AG04449 (cell line): ENCODE measurements at regions of chr16 and their contacts with region 1.

Region 1: DNA sequence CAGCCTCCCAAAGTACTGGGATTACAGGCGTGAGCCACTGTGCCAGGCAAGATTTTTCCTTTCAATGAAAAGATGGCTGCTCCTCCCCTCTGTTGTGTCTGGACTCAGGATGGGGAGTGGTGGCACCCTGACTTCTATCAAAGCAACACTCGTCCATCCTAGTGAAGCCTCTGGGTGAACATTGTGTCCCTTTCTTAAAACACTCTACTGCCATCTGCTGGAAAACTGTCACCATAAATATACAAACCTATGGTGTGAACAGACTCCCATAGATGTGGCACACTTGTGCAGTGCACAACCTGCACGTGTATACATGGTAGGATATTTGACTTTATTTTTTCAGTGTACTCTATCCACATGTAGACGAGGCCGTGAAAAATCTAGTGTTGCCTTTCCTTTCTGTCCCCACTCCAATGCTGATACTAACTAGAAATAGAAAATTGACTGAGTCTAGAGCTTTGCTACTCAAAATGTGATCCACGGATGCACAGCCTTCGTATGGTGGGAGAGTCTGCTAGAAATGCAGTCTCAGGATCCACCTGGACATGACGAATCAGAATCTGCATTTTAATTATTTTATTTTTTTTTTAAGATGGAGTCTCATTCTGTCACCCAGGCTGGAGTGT is 55.9 kb upstream of the PLCG2 start:
- DNase-seq: peak; percentile 50
- H3K4me3 ChIP-seq: no peak overlapping the region
- CTCF ChIP-seq: peak; percentile 57

Region 2: GRCh38 chr16:81384006-81384405 is 339.2 kb before region 1 on chr16:
- CTCF ChIA-PET with region 1: interaction called, 11 read pairs
- POLR2A ChIA-PET with region 1: no interaction called
- DNase-seq: no peak
- H3K4me3 ChIP-seq: no peak overlapping the region
- CTCF ChIP-seq: no peak

Region 3: DNA sequence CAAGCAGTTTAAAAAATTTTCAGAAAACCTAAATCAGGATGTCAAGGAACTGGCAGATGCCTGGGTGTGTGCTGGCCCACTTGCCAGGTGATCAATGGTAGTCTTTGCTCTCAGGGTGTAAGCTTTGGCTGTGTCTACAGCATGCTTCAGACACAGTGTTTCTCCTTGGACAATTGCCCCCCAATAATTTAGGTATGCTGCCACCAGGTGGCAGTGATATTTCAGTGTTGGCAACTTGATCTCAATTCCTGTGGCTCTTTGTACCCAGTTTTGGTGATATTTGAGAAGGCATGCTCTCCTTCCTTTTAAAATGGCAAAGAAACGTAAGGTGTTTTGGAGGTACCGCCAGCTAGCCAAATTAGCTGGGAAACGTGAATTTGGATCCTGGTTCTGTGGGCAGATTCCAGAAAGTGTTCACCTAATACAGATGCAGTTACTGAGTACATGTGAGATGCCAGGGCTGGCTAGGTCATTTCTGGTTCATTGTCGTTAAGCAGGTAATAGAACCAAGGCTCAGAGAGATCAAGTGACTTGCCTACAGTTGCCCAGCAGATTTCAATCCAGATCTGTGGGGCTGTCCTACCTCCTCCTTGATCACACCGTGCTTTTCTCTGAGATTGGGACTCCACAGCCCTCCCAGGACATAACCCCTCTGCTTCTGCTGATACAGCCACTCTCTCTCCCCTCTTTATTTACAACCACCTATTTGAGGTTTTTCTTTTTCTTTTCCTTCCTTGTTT is 99.7 kb before region 1 on chr16:
- CTCF ChIA-PET with region 1: interaction called, 46 read pairs
- POLR2A ChIA-PET with region 1: no interaction called
- DNase-seq: no peak
- H3K4me3 ChIP-seq: no peak overlapping the region
- CTCF ChIP-seq: peak; percentile 55

Region 4: GRCh38 chr16:81696961-81697615 is 26.1 kb before region 1 on chr16:
- CTCF ChIA-PET with region 1: no interaction called
- POLR2A ChIA-PET with region 1: no interaction called
- DNase-seq: peak; percentile 4
- H3K4me3 ChIP-seq: no peak overlapping the region
- CTCF ChIP-seq: peak; percentile 71

Region 5: DNA sequence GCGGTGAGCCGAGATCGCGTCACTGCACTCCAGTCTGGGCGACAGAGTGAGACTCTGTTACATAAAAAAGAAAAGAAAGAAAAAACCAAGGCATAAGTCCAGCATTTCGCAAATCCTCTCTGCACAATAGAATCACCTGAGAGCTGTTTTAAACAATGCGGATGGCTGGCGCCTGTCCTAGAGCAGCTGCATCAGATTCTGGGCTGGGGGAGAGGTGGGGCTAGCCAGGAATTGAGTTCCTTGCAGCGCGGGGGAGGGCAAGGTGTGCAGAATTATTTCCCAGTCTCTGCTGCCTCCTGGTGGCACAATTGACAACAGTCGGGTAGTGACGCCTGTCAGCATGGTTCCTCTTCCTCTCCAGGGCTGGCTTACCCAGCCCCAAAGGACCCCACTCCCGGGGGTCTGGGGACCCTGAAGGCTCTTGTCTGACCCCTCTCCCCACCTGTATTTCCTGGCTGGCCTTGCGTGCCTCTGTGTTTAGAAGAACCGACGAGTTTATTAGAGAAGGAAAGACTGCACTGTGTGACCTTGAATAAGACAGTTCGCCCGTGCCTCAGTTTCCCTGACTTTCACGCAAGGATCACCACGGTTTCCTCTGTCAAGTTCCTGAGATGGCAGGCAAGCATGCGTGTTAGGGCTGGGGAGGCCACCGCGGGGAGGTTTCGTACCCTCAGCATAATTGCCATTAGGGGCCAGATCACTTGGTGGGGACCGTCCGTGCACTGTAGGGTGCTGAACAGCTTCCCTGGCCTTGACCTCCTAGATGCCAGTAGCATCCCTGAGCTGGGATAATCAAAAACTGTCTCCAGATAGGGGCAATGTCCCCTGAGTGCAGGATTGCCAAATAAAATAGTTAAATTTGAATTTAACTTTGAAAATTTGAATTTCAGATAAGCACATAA is 14.9 kb after region 1 on chr16:
- CTCF ChIA-PET with region 1: interaction called, 11 read pairs
- POLR2A ChIA-PET with region 1: no interaction called
- DNase-seq: no peak
- H3K4me3 ChIP-seq: peak overlapping the region; percentile 43
- CTCF ChIP-seq: peak; percentile 82